Panc1 (cell line): ENCODE measurements at regions of chr10 and their contacts with region 1.

Region 1: DNA sequence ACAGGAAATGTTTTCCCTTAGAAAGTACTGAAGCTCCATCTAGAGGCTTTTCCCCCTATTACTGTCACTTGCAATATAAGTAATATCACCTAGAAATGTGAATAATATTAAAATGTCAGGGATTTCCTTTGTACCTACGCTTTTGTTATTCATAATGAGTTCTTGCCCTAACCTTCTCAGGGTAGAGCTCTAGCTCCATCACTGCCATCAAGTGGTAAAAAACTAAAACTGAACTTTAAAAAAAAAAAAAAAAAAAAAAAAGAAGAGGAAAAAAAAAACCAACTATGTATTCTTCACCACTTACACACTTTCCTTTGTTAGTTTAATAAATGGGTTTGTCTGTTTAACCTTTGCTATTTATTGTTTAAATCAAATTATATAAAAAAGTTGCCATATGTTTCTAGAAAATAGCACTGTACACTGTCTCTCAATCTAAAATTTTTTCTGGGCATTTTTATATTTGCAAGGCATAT is 49.9 kb downstream of the DNAJC1 start:
- DNase-seq: no peak
- ATAC-seq: no peak
- H3K4me3 ChIP-seq: no peak overlapping the region
- H3K27ac ChIP-seq: no peak overlapping the region
- H3K4me1 ChIP-seq: no peaks in the 10 kb centered on the region; the same call in 1 of the 2 replicates
- H3K27me3 ChIP-seq: no peaks in the 10 kb centered on the region
- CTCF ChIP-seq: peak; percentile 52; the same call in 1 of the 2 replicates

Region 2: DNA sequence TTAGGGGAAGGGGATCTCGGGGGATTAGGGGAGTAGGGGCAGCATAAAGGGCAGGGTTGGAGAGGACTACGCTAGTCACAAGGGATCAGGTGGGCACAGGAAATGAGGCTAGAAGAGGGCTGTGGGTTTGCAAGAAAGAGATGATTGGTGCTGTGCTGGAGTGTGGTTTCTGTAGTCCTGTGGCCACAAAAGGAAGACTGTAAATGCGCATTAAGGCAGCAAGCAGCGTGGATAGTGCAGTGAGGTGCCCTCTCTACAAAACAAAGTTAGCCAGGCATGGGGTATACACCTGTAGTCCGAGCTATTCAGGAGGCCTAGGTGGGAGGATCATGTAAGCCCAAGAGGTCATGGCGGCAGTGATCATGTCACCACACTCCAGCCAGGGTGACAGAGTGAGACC is 207.5 kb before region 1 on chr10:
- CTCF ChIA-PET with region 1: no interaction called
- POLR2A ChIA-PET with region 1: no interaction called
- in situ Hi-C with region 1: no loop called
- intact Hi-C with region 1: loop called (anchors 10 kb)
- DNase-seq: no peak
- ATAC-seq: no peak
- H3K4me3 ChIP-seq: no peak overlapping the region
- H3K27ac ChIP-seq: no peak overlapping the region
- H3K4me1 ChIP-seq: 0 out of 2 replicates have a peak, but pooled peaks cover 3% of the 10 kb centered on the region
- H3K27me3 ChIP-seq: no peaks in the 10 kb centered on the region
- CTCF ChIP-seq: no peak

Region 3: DNA sequence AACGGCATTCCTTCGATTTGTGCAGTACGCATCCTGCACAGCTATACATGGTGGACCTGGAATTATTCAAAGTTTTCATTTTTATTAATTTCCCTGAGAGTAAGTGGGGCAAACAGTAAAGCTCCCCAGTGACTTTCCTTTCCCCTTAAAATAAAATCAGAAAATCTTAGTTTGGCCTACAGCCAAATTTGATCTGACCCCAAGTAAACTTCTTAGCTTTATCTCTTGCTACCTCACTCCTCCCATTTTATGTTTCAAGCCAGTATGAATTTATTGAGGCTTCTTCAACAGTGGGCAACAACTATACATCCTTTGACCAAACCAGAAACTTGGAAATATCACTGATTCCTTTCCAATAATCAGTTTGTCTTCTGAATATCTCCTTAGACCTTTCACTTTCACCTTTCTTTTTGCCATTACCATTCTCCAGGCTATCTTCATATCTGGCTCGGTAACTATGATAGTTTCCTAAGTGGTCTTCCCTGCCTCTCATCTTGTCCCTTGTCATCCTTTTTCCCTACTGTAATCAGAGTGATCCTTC is 402.8 kb after region 1 on chr10:
- CTCF ChIA-PET with region 1: no interaction called
- POLR2A ChIA-PET with region 1: interaction called, 13 read pairs
- in situ Hi-C with region 1: no loop called
- intact Hi-C with region 1: no loop called
- DNase-seq: no peak
- ATAC-seq: no peak
- H3K4me3 ChIP-seq: no peak overlapping the region
- H3K27ac ChIP-seq: no peak overlapping the region
- H3K4me1 ChIP-seq: no peaks in the 10 kb centered on the region
- H3K27me3 ChIP-seq: no peaks in the 10 kb centered on the region
- CTCF ChIP-seq: no peak